Activated CD8-positive, alpha-beta T cell treated with anti-CD3 and anti-CD28 coated beads, Interleukin-2, amount 10 ng/mL, durations not matched to agents 7 days and 5 days (primary cell): ENCODE measurements at regions of chr11 and their contacts with region 1.

Region 1: GRCh38 chr11:75280227-75280701 is 39.7 kb downstream of the TPBGL start:
- DNase-seq: peak; percentile 85
- ATAC-seq: peak; percentile 62
- H3K4me3 Mint-ChIP-seq: no peak overlapping the region
- H3K27ac Mint-ChIP-seq: peak overlapping the region; percentile 69
- H3K4me1 Mint-ChIP-seq: peaks cover 31% of the 10 kb centered on the region
- H3K27me3 Mint-ChIP-seq: no peaks in the 10 kb centered on the region

Region 2: GRCh38 chr11:75040167-75040770 is 240.0 kb before region 1 on chr11:
- CTCF ChIA-PET with region 1: no interaction called
- POLR2A ChIA-PET with region 1: no interaction called
- DNase-seq: no peak
- ATAC-seq: no peak
- H3K4me3 Mint-ChIP-seq: no peak overlapping the region
- H3K27ac Mint-ChIP-seq: no peak overlapping the region
- H3K4me1 Mint-ChIP-seq: peaks cover 2% of the 10 kb centered on the region
- H3K27me3 Mint-ChIP-seq: peaks cover 8% of the 10 kb centered on the region

Region 3: DNA sequence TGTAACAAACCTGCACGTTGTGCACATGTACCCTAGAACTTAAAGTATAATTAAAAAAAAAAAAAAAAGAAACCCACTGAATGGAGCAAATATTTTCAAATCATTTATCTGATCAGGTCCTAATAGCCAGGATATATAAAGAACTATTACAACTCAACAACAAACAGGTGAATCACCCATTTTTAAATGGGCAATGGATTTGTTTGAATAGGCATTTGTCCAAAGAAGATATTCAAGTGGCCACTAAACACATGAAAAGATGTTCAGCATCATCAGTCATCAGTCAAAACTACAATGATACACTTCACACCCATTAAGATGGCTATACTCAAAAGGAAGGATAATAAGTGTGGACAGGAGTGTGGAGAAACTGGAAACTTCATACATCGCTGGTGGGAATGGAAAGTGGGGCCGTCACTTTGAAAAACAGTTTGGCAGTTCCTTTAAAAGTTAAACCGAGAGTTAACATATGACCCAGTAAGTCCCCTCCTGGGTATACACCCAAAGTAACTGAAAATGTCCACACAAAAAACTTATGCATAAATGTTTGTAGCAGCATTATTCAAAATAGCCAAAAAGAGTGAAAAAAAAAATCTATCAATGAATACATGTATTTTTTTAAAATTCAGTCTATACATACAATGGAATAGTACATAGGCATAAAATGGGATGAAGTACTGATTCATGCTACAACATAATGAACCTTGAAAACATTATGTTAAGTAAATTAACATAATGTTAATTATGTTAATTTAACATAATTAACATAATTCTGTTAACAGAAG is 18.1 kb after region 1 on chr11:
- CTCF ChIA-PET with region 1: interaction called, 13 read pairs
- POLR2A ChIA-PET with region 1: interaction called, 4 read pairs
- DNase-seq: no peak
- ATAC-seq: no peak
- H3K4me3 Mint-ChIP-seq: no peak overlapping the region
- H3K27ac Mint-ChIP-seq: no peak overlapping the region
- H3K4me1 Mint-ChIP-seq: peaks cover 9% of the 10 kb centered on the region
- H3K27me3 Mint-ChIP-seq: no peaks in the 10 kb centered on the region

Region 4: DNA sequence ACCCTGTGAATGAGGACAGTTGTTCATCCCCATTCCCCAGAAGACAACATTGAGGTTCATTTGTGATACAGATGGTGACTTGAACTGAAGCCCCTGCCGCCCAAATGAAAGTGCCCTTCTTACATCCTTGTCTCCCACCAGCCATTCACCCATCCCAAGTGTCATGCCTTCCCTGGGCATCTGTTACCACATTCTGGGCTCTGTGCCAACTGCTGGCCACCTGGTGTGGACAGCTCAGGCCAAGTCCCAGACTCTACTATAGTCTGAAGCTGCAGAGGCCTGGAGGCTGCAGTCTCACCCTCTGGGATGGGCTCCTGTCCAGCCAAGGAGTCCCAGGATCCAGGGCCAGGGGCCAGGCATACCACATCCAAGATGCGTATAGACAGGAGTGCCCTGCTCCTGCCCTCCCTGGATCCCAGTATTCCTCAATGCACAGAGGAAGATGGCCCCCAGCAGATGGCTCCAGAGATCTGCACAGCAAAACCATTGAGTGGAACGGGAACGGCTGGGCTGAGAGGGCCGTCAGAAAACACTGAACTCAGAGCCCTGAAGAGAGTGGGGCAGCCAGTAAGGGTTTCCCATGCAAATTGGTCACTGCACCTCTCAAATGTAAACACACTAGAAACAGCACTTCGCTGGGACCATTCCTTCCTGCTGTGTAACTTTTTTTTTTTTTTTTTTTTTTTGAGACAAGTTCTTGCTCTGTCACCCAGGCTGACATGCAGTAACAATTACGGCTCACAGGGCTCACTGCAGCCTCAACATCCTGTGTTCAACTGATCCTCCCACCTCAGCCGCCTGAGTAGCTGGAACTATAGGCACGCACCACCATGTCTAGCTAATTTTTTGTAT is 48.4 kb after region 1 on chr11:
- CTCF ChIA-PET with region 1: interaction called, 48 read pairs
- POLR2A ChIA-PET with region 1: interaction called, 4 read pairs
- DNase-seq: peak; percentile 87
- ATAC-seq: peak; percentile 89
- H3K4me3 Mint-ChIP-seq: peak overlapping the region; percentile 47
- H3K27ac Mint-ChIP-seq: peak overlapping the region; percentile 94
- H3K4me1 Mint-ChIP-seq: peaks cover 78% of the 10 kb centered on the region
- H3K27me3 Mint-ChIP-seq: no peaks in the 10 kb centered on the region

Region 5: DNA sequence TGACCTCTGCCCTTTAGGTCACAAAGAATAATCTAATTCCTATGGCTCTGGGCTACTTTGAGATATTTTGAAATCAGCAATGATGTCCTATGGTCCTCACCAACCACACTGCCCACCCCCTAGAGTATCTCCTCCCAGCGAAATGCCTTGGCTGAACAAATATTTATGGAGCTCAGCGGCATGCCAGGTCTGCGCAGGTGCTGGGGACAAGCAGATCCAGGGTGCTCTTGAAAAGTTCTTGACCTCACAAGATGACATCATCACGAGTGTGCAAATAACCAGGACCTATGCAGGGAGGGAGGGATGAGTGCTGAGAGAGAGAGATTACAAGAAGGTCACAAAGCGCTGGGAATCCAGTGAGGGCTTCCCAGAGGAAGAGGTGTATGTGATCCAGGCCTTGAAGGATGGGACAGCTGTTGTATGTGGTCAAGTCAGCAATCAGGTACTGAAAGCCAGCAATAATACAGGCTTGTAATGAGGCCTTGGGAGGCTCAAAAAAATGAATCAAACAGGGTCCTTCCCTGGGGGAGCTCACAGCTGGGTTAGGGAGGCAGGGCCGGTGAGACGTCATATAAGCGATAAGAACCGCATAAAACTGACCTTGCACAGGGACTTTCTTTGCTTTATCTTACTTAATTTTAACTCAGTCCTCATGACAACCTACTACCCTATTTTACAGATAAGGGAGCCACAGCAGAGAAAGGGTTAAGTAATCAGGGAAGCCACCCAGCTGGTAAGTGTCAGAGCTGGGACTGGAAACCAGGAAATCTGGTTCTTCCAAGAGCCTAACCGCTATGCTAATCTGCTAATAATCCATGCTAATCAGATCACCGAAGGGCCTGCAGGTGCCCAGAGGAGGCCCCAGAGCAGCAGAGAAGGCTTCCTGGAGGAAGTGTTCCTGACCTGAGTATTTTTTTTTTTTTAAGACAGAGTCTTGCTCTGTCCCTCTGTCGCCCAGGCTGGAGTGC is 62.9 kb after region 1 on chr11:
- CTCF ChIA-PET with region 1: interaction called, 16 read pairs
- POLR2A ChIA-PET with region 1: interaction called, 3 read pairs
- DNase-seq: no peak
- ATAC-seq: no peak
- H3K4me3 Mint-ChIP-seq: no peak overlapping the region
- H3K27ac Mint-ChIP-seq: peak overlapping the region; percentile 73
- H3K4me1 Mint-ChIP-seq: peaks cover 99% of the 10 kb centered on the region
- H3K27me3 Mint-ChIP-seq: no peaks in the 10 kb centered on the region

Region 6: GRCh38 chr11:75351791-75352587 is 71.7 kb after region 1 on chr11:
- CTCF ChIA-PET with region 1: interaction called, 11 read pairs
- POLR2A ChIA-PET with region 1: interaction called, 8 read pairs
- DNase-seq: peak; percentile 77
- ATAC-seq: peak; percentile 62
- H3K4me3 Mint-ChIP-seq: peak overlapping the region; percentile 87
- H3K27ac Mint-ChIP-seq: peak overlapping the region; percentile 94
- H3K4me1 Mint-ChIP-seq: peaks cover 60% of the 10 kb centered on the region
- H3K27me3 Mint-ChIP-seq: no peaks in the 10 kb centered on the region

Region 7: GRCh38 chr11:75399344-75400145 is 119.3 kb after region 1 on chr11 and contains the start of gene RPS3:
- CTCF ChIA-PET with region 1: interaction called, 13 read pairs
- POLR2A ChIA-PET with region 1: interaction called, 7 read pairs
- DNase-seq: peak; percentile 93
- ATAC-seq: peak; percentile 91
- H3K4me3 Mint-ChIP-seq: peak within 1 kb of the TSS; percentile 96
- H3K27ac Mint-ChIP-seq: peak within 1 kb of the TSS; percentile 98
- H3K4me1 Mint-ChIP-seq: peaks cover 46% of the 10 kb centered on the region
- H3K27me3 Mint-ChIP-seq: peaks cover 5% of the 10 kb centered on the region
- total RNA-seq, gene RPS3: 2,820 to 2,871 TPM

Region 8: DNA sequence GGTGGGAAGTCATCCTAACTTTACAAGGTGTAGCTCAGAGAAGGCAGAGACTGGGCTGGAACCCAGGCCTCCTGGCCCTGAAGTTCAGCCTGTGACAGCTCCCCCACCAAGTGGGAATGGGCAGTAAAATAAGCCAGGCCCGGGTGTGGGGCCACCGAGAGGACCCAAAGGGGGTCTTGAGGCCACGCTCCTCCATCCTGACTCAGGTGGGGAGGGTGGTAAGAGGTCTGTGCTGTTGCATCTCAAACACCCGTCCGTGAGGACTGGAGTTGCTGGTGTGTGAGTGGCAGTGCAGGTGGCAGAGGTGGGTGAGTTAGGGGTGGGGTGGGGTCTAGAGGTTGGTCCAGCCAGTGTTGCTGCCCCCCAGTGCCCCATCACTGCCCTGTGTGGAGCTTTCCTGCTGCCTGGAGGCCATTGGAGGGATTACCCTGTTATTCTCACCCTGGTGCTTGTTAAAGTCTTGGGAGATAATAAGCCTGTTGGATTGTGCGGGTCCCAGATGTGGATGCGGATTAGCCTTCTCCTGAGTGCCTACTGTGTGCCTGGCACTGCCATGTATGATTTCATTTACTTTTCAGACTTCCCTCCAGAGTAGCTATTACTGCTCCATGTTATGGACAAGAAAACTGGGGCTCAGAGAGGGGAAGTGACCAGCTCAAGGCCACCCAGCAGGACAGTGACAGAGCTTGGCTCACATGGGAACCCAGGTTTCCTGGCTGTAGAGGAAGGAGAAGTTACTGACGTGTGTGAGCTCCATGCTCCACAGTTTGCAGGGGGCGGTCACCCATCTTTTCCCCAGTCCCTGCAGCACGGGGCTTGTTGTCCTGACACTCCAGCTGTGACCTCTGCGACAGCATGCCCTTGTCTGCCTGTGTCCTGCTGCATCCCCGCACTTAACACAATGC is 294.7 kb after region 1 on chr11:
- CTCF ChIA-PET with region 1: no interaction called
- POLR2A ChIA-PET with region 1: no interaction called
- DNase-seq: no peak
- ATAC-seq: no peak
- H3K4me3 Mint-ChIP-seq: no peak overlapping the region
- H3K27ac Mint-ChIP-seq: no peak overlapping the region
- H3K4me1 Mint-ChIP-seq: peaks cover 14% of the 10 kb centered on the region
- H3K27me3 Mint-ChIP-seq: no peaks in the 10 kb centered on the region